ENCODE measurements at regions of chr22 and their contacts with region 1.

Region 1: GRCh38 chr22:41946629-41947423 is at the start of gene CENPM:
- H3K4me3 ChIP-seq: peak within 1 kb of the TSS; percentile 68
- H3K27ac ChIP-seq: peak within 1 kb of the TSS; percentile 90
- H3K4me1 ChIP-seq: no peaks in the 10 kb centered on the region
- CTCF ChIP-seq: peak; percentile 2; the same call in 1 of the 2 replicates

Region 2: DNA sequence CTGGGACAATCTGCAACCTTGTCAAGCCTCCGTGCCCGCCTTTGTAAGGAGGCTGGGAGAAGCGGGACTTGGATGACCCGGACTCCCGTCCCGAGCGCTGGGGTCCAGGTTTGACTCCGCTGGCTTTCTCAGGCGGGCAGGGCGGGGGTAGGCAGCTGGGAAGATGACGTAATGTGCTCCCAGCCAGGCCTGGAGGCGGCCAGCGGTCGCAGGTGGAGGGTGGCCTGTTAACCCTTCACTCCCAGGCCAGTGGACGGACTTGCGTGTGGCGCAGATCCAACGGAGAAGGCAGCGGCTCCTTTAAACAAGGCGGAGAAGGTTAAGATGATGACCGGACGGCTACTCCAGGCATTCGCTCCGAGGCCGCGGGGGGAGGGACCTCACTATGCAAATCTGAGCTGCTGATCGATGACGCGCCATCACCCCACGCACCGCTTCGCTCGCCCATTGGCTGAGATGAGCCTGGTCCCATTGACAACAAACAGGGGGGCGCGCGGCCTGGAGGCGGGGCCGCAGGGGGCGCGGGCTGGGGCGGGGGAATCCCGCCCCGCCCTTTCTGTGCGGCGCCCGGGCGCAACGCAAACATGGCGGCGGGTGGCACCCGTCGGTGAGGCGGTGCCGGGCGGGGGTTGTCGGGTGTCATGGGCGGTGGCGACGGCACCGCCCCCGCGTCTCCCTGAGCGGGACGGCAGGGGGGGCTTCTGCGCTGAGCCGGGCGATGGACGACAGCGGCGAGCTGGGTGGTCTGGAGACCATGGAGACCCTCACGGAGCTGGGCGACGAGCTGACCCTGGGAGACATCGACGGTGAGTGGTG is 114.1 kb before region 1 on chr22 and contains the start of gene SREBF2:
- CTCF ChIA-PET with region 1: no interaction called
- POLR2A ChIA-PET with region 1: interaction called, 10 read pairs
- H3K4me3 ChIP-seq: peak within 1 kb of the TSS; percentile 96
- H3K27ac ChIP-seq: peak within 1 kb of the TSS; percentile 87
- H3K4me1 ChIP-seq: peaks cover 3% of the 10 kb centered on the region; the same call in 1 of the 2 replicates
- CTCF ChIP-seq: peak; percentile 69

Region 3: GRCh38 chr22:41925655-41926460 is 21.0 kb before region 1 on chr22:
- CTCF ChIA-PET with region 1: interaction called, 12 read pairs
- POLR2A ChIA-PET with region 1: interaction called, 27 read pairs
- H3K4me3 ChIP-seq: peak overlapping the region; percentile 1
- H3K27ac ChIP-seq: no peak overlapping the region; the same call in 1 of the 2 replicates
- H3K4me1 ChIP-seq: peaks cover 2% of the 10 kb centered on the region; the same call in 1 of the 2 replicates
- CTCF ChIP-seq: peak; percentile 60; the same call in 1 of the 2 replicates

Region 4: DNA sequence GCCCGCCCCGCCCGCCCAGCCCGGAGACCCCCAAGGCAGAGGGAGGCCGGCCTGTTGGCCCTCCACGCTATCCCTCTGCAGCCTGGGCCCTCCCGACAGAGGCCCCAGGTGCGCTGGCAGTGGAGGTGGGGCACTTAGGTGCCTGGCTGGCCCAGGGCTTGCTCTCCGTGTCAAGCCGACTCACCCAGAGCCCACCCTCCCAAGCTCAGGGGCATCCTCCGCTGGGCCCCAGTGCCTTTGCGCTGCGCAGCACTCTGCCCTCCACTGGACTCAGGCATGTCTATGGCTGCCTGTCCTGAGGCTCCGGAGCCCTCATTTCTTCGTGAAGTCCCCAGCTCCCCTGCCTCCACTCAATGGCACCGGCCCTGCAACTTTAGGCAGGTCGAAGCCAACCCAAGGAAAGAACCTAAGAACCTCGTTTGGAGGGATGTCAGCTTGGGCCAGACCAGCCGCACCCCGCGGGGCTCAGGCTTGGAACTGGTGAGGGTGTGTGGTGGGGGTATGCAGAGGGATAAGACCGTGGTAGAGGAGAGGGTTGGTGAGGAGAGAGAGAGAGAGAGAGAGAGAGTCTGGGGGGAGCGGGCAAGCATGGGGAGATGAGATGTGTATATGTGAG is 11.2 kb after region 1 on chr22:
- CTCF ChIA-PET with region 1: interaction called, 26 read pairs
- POLR2A ChIA-PET with region 1: interaction called, 8 read pairs
- H3K4me3 ChIP-seq: no peak overlapping the region
- H3K27ac ChIP-seq: no peak overlapping the region
- H3K4me1 ChIP-seq: peaks cover 12% of the 10 kb centered on the region
- CTCF ChIP-seq: no peak

Region 5: GRCh38 chr22:42090596-42091454 is 144.0 kb after region 1 on chr22 and contains the start of gene NDUFA6:
- CTCF ChIA-PET with region 1: interaction called, 6 read pairs
- POLR2A ChIA-PET with region 1: interaction called, 20 read pairs
- H3K4me3 ChIP-seq: peak within 1 kb of the TSS; percentile 96
- H3K27ac ChIP-seq: peak within 1 kb of the TSS; percentile 78
- H3K4me1 ChIP-seq: no peaks in the 10 kb centered on the region
- CTCF ChIP-seq: peak; percentile 100